ENCODE measurements at regions of chr9 and their contacts with region 1.

Region 1: GRCh38 chr9:96566498-96567207 is 53.0 kb downstream of the CDC14B start:
- DNase-seq: peak; percentile 81 to 84
- H3K4me3 ChIP-seq: peak overlapping the region; percentile 27 to 76 (median 38)
- H3K27ac ChIP-seq: peak overlapping the region; percentile 86 to 98 (median 94)
- H3K4me1 ChIP-seq: peaks cover 4 to 5% of the 10 kb centered on the region in 2 donors
- H3K27me3 ChIP-seq: no peaks in the 10 kb centered on the region
- CTCF ChIP-seq: peak; percentile 43 to 80 (median 64)
- POLR2A ChIP-seq: peak in 1 of 2 donors; percentile 46

Region 2: GRCh38 chr9:96514108-96514799 is 52.4 kb before region 1 on chr9:
- intact Hi-C with region 1: loop called (anchors 10 kb)
- DNase-seq: no peak
- H3K4me3 ChIP-seq: no peak overlapping the region
- H3K27ac ChIP-seq: peak overlapping the region; percentile 4 to 65 (median 64)
- H3K4me1 ChIP-seq: peaks cover 11 to 32% of the 10 kb centered on the region in 2 donors
- H3K27me3 ChIP-seq: no peaks in the 10 kb centered on the region
- CTCF ChIP-seq: no peak
- POLR2A ChIP-seq: no peak

Region 3: GRCh38 chr9:96654443-96655197 is 88.0 kb after region 1 on chr9:
- intact Hi-C with region 1: loop called (anchors 5 kb)
- DNase-seq: peak; percentile 81 to 82
- H3K4me3 ChIP-seq: peak overlapping the region; percentile 14 to 46 (median 44)
- H3K27ac ChIP-seq: peak overlapping the region; percentile 94 to 99 (median 97)
- H3K4me1 ChIP-seq: peaks cover 6 to 8% of the 10 kb centered on the region in 2 donors
- H3K27me3 ChIP-seq: no peaks in the 10 kb centered on the region
- CTCF ChIP-seq: peak in 3 of 6 experiments; percentile 20 to 29 (median 26)
- POLR2A ChIP-seq: no peak

Region 4: GRCh38 chr9:96888591-96888990 is 321.9 kb after region 1 on chr9:
- intact Hi-C with region 1: no loop called
- DNase-seq: no peak
- H3K4me3 ChIP-seq: no peak overlapping the region
- H3K27ac ChIP-seq: no peak overlapping the region
- H3K4me1 ChIP-seq: no peaks in the 10 kb centered on the region
- H3K27me3 ChIP-seq: no peaks in the 10 kb centered on the region
- CTCF ChIP-seq: no peak
- POLR2A ChIP-seq: no peak